Activated CD4-positive, alpha-beta T cell treated with anti-CD3 and anti-CD28 coated beads, Interleukin-2, amount 10 ng/mL, durations not matched to agents 24 days and 14 days (primary cell): ENCODE measurements at regions of chr12 and their contacts with region 1.

Region 1: GRCh38 chr12:15910864-15911721 is at the start of gene DERA:
- DNase-seq: peak; percentile 90
- H3K4me3 Mint-ChIP-seq: peak within 1 kb of the TSS; percentile 84
- H3K27ac Mint-ChIP-seq: peak within 1 kb of the TSS; percentile 77
- H3K4me1 Mint-ChIP-seq: peaks cover 10% of the 10 kb centered on the region
- H3K27me3 Mint-ChIP-seq: no peaks in the 10 kb centered on the region
- total RNA-seq, gene DERA: 15.9 and 17.3 TPM in 2 replicates

Region 2: GRCh38 chr12:14629832-14630710 is 1281.0 kb before region 1 on chr12:
- intact Hi-C with region 1: no loop called
- DNase-seq: peak; percentile 90
- H3K4me3 Mint-ChIP-seq: no peak overlapping the region
- H3K27ac Mint-ChIP-seq: no peak overlapping the region
- H3K4me1 Mint-ChIP-seq: no peaks in the 10 kb centered on the region
- H3K27me3 Mint-ChIP-seq: peaks cover 23% of the 10 kb centered on the region

Region 3: DNA sequence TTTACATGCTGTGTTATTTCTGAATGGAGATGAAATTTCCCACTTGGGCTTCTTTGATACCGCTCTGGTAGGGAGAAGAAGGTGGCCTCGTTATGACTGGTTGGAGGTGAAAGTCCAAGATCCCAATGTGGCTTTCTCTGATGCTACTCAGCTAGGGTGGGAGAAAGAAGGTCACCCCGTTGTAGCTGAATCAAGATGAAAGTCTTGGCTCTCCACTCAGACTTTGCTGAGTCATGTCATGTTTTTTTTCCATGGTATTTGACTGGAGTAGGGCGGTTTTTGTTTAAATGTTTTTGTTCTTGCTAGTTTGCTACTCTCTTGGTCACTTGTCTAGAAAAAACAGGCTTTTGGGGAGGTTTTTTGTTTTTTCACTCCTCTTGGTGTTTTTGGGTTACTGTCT is 940.6 kb before region 1 on chr12:
- intact Hi-C with region 1: no loop called
- DNase-seq: no peak
- H3K4me3 Mint-ChIP-seq: no peak overlapping the region
- H3K27ac Mint-ChIP-seq: peak overlapping the region; percentile 51
- H3K4me1 Mint-ChIP-seq: peaks cover 19% of the 10 kb centered on the region
- H3K27me3 Mint-ChIP-seq: no peaks in the 10 kb centered on the region

Region 4: GRCh38 chr12:15875863-15876262 is 35.2 kb before region 1 on chr12:
- intact Hi-C with region 1: no loop called
- DNase-seq: no peak
- H3K4me3 Mint-ChIP-seq: no peak overlapping the region
- H3K27ac Mint-ChIP-seq: no peak overlapping the region
- H3K4me1 Mint-ChIP-seq: peaks cover 11% of the 10 kb centered on the region
- H3K27me3 Mint-ChIP-seq: peaks cover 19% of the 10 kb centered on the region

Region 5: GRCh38 chr12:15899282-15899870 is 11.7 kb before region 1 on chr12:
- intact Hi-C with region 1: loop called (anchors 1 kb)
- DNase-seq: no peak
- H3K4me3 Mint-ChIP-seq: no peak overlapping the region
- H3K27ac Mint-ChIP-seq: no peak overlapping the region
- H3K4me1 Mint-ChIP-seq: peaks cover 8% of the 10 kb centered on the region
- H3K27me3 Mint-ChIP-seq: no peaks in the 10 kb centered on the region